ENCODE measurements at regions of chr6 and their contacts with region 1.

Region 1: DNA sequence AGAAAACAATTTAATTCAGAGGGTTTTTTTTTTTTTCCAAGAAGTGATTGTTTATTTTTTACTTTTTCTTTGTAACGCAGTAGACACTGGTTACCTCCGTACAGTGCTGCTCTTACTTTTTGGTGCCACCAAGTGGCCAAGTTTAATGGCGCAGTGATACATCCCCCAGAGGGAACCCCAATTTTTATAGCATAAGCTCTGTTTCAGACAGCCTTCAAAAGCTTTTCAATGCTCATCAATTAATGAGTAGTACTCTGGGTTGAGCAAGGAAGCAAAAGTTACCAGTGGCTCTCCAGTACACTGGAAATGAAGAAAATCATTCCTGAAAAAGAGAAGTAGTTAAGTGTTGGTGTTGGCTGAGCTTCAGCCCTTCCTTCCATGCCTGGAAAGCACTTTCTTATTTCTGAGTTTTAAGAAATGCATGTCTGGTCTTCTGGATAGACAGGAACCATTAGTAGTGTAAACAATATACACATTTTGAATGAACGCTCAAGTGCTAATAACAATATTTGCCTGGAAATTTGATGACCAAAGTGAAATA is 129.1 kb upstream of the SMLR1 start:
- DNase-seq: peak; percentile 12 to 69 (median 45)
- ATAC-seq: peak; percentile 65
- H3K4me3 ChIP-seq: no peak overlapping the region
- H3K4me3 Mint-ChIP-seq: no peak overlapping the region
- H3K27ac ChIP-seq: no peak overlapping the region
- H3K27ac Mint-ChIP-seq: no peak overlapping the region
- H3K4me1 ChIP-seq: peaks cover 9% of the 10 kb centered on the region
- H3K4me1 Mint-ChIP-seq: peaks cover 37% of the 10 kb centered on the region
- H3K27me3 ChIP-seq: no peaks in the 10 kb centered on the region
- H3K27me3 Mint-ChIP-seq: no peaks in the 10 kb centered on the region
- CTCF ChIP-seq: peak; percentile 69

Region 2: GRCh38 chr6:130047088-130047995 is 650.7 kb before region 1 on chr6:
- CTCF ChIA-PET with region 1: no interaction called
- POLR2A ChIA-PET with region 1: no interaction called
- intact Hi-C with region 1: loop called in 1 of 2 experiments (anchors 10 kb)
- DNase-seq: peak in 1 of 9 experiments; percentile 16
- ATAC-seq: no peak
- H3K4me3 ChIP-seq: no peak overlapping the region
- H3K4me3 Mint-ChIP-seq: no peak overlapping the region
- H3K27ac ChIP-seq: no peak overlapping the region
- H3K27ac Mint-ChIP-seq: no peak overlapping the region
- H3K4me1 ChIP-seq: no peaks in the 10 kb centered on the region
- H3K4me1 Mint-ChIP-seq: peaks cover 20% of the 10 kb centered on the region
- H3K27me3 ChIP-seq: no peaks in the 10 kb centered on the region
- H3K27me3 Mint-ChIP-seq: no peaks in the 10 kb centered on the region
- CTCF ChIP-seq: no peak

Region 3: DNA sequence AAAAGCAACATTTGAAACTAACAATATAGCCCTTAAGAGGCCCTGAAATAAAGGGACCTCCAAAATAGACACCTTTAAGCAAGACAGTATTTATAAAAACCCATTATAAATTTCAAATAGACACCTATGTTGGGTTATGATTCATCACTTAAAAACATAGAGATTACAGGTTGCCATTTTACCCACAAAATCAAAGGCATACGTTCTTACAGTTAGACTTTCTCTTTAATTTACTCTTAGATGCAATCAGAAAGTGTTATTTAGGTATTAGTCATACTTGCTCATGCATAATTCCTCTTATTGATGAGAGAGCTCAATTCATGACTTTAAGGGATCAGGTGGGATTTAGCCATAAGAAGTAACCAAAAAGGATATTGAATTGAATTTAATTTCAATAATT is 383.8 kb before region 1 on chr6:
- CTCF ChIA-PET with region 1: interaction called, 10 read pairs
- POLR2A ChIA-PET with region 1: no interaction called
- intact Hi-C with region 1: no loop called
- DNase-seq: no peak
- ATAC-seq: no peak
- H3K4me3 ChIP-seq: no peak overlapping the region
- H3K4me3 Mint-ChIP-seq: no peak overlapping the region
- H3K27ac ChIP-seq: no peak overlapping the region
- H3K27ac Mint-ChIP-seq: no peak overlapping the region
- H3K4me1 ChIP-seq: no peaks in the 10 kb centered on the region
- H3K4me1 Mint-ChIP-seq: no peaks in the 10 kb centered on the region
- H3K27me3 ChIP-seq: no peaks in the 10 kb centered on the region
- H3K27me3 Mint-ChIP-seq: no peaks in the 10 kb centered on the region
- CTCF ChIP-seq: no peak

Region 4: DNA sequence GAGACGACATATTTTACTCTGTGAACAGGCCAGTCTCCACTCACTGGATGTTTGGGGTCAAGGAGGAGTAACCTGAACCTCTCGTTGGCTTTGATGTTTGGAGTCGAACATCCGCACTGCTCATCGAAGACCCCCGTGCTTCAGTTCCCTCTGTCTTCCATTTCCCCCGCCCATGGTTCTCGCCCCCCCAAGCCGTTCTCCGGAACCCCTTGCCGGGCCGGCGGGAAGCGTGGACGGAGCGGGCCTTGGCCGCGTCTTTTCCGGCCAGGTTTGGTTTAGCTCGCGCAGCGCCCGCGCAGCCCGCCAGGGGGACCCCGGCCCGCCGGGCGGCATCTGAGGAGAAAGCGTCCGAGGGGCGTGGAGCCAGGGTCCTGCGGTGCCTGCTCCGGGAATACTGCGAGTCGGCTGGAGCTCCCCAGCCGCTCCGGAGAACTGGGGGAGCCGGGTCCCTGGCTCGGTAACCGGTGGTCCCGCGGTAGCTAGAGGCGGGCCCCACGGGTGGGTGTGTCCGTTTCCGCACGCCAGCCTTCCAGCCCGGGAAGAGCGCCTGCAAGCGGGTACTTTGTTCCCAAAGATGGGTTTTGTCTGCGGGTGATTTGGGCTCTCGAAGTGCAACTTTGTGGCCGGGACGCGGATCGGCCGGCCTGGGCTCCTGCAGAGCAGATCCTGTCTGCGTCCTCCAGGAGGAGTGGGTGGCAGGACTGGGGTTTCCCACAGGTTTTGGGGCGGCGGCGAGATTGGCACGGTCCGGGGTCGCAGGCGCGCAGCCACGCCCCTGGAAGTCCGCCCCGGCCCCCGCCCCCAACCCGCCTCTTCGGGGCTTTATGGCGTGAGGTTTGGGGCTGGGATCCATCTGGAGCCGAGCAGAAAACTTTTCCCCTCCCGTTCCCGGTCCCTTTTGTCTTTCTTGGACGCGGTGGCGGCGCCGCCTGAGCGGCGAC is 332.6 kb before region 1 on chr6 and contains the start of gene TMEM200A:
- CTCF ChIA-PET with region 1: interaction called, 13 read pairs
- POLR2A ChIA-PET with region 1: no interaction called
- intact Hi-C with region 1: loop called in 1 of 2 experiments (anchors 2 kb)
- DNase-seq: peak in 6 of 9 experiments; percentile 29 to 63 (median 42)
- ATAC-seq: peak; percentile 44
- H3K4me3 ChIP-seq: peak within 1 kb of the TSS; percentile 74 to 76
- H3K4me3 Mint-ChIP-seq: peak within 1 kb of the TSS; percentile 77
- H3K27ac ChIP-seq: no peak within 1 kb of the TSS
- H3K27ac Mint-ChIP-seq: no peak within 1 kb of the TSS
- H3K4me1 ChIP-seq: no peaks in the 10 kb centered on the region
- H3K4me1 Mint-ChIP-seq: peaks cover 18% of the 10 kb centered on the region
- H3K27me3 ChIP-seq: peaks cover 6 to 7% of the 10 kb centered on the region in 2 experiments
- H3K27me3 Mint-ChIP-seq: peaks cover 15% of the 10 kb centered on the region
- CTCF ChIP-seq: peak; percentile 53
- total RNA-seq, gene TMEM200A: 0.22 to 0.27 TPM

Region 5: GRCh38 chr6:130843575-130844320 is 145.7 kb after region 1 on chr6:
- CTCF ChIA-PET with region 1: interaction called, 8 read pairs
- POLR2A ChIA-PET with region 1: no interaction called
- intact Hi-C with region 1: loop called in 1 of 2 experiments (anchors 1 kb)
- DNase-seq: peak in 3 of 9 experiments; percentile 7 to 75 (median 64)
- ATAC-seq: peak; percentile 86
- H3K4me3 ChIP-seq: no peak overlapping the region
- H3K4me3 Mint-ChIP-seq: no peak overlapping the region
- H3K27ac ChIP-seq: no peak overlapping the region
- H3K27ac Mint-ChIP-seq: no peak overlapping the region
- H3K4me1 ChIP-seq: no peaks in the 10 kb centered on the region
- H3K4me1 Mint-ChIP-seq: no peaks in the 10 kb centered on the region
- H3K27me3 ChIP-seq: no peaks in the 10 kb centered on the region
- H3K27me3 Mint-ChIP-seq: no peaks in the 10 kb centered on the region
- CTCF ChIP-seq: peak; percentile 86